Activated CD4-positive, alpha-beta memory T cell treated with anti-CD3 and anti-CD28 coated beads for 36 hours (primary cell): ENCODE measurements at regions of chr20 and their contacts with region 1.

Region 1: GRCh38 chr20:37192137-37192854 is 12.9 kb upstream of the MROH8 start:
- DNase-seq: peak; percentile 80
- H3K4me3 Mint-ChIP-seq: no peak overlapping the region
- H3K27ac Mint-ChIP-seq: no peak overlapping the region
- H3K4me1 Mint-ChIP-seq: peaks cover 73% of the 10 kb centered on the region
- H3K27me3 Mint-ChIP-seq: no peaks in the 10 kb centered on the region

Region 2: DNA sequence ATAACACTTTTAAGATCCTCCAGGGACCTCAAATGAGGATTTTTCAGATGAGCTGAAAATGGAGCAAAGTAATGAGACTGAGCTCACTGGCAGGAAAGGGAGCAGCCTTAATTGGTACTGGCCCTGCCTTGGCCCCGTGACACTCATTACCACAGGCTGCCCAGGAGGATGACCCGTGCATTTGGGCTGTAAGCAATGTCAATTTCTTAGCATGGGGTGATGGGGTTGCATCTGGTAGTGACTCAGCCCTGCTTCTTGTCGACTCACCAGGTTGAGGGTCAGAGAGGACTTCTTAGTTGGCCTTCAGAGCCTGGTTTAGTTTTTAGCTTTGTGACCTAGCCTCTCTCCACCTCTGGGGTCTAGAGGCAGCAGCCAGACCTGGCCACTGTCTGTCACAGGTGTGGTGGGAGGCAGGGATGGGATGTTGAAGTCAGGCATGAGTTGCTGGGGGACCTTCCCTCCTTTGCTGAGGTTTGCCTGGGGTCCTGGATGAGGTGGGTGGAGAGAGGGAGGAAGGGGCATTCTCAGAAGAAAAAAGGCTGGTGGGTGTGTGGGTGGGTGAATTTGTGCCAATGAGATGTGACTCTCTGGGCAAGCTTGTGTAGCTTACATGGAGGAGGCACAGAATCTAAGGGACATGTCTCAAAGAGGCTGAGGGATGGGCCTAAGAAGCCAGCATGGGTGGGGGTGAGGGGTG is 1063.7 kb before region 1 on chr20:
- CTCF ChIA-PET with region 1: no interaction called
- POLR2A ChIA-PET with region 1: no interaction called
- intact Hi-C with region 1: no loop called
- DNase-seq: no peak
- H3K4me3 Mint-ChIP-seq: no peak overlapping the region
- H3K27ac Mint-ChIP-seq: no peak overlapping the region
- H3K4me1 Mint-ChIP-seq: no peaks in the 10 kb centered on the region
- H3K27me3 Mint-ChIP-seq: no peaks in the 10 kb centered on the region

Region 3: GRCh38 chr20:37178839-37179670 is 13.2 kb before region 1 on chr20 and contains the starts of genes MROH8 and RPN2:
- CTCF ChIA-PET with region 1: interaction called, 43 read pairs
- POLR2A ChIA-PET with region 1: interaction called, 6 read pairs
- intact Hi-C with region 1: loop called (anchors 1 kb)
- DNase-seq: peak; percentile 98
- H3K4me3 Mint-ChIP-seq: peak within 1 kb of the TSS; percentile 95
- H3K27ac Mint-ChIP-seq: peak within 1 kb of the TSS; percentile 96
- H3K4me1 Mint-ChIP-seq: peaks cover 33% of the 10 kb centered on the region
- H3K27me3 Mint-ChIP-seq: no peaks in the 10 kb centered on the region
- total RNA-seq, gene MROH8: 1.8 to 2.0 TPM
- total RNA-seq, gene RPN2: 123 to 125 TPM

Region 4: DNA sequence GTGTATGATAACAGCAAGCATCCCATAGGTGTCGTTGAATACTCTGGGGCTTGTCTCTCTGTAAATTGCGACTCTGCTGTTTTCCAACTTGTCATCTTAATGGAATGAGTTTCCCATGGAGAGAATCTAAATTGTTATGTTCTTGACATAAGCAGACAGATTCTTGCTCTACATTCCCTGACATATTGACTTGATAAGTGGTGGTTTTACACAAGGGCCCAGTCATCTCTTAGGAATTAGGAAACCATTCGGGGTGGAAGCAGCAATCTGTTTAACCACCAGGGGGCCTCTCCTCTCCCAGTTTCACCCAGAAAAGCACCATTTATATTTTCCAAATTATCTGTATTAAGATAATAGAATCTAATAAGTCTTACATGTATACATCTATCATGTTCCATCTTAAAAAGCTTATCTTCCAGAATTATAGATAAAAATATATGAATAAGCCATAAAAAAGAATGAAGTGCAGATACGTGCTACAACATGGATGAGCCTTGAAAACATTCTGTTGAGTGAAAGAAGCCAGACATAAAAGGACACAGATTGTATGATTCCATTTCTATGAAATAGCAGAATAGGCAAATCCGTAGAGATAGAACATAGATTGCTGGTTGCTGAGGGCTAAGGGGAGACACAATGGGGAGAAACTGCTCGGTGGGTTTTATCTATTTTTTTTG is 10.1 kb after region 1 on chr20:
- CTCF ChIA-PET with region 1: interaction called, 31 read pairs
- POLR2A ChIA-PET with region 1: no interaction called
- intact Hi-C with region 1: no loop called
- DNase-seq: peak; percentile 20
- H3K4me3 Mint-ChIP-seq: no peak overlapping the region
- H3K27ac Mint-ChIP-seq: no peak overlapping the region
- H3K4me1 Mint-ChIP-seq: no peaks in the 10 kb centered on the region
- H3K27me3 Mint-ChIP-seq: no peaks in the 10 kb centered on the region

Region 5: GRCh38 chr20:37209661-37210314 is 17.5 kb after region 1 on chr20:
- CTCF ChIA-PET with region 1: interaction called, 16 read pairs
- POLR2A ChIA-PET with region 1: no interaction called
- intact Hi-C with region 1: no loop called
- DNase-seq: no peak
- H3K4me3 Mint-ChIP-seq: no peak overlapping the region
- H3K27ac Mint-ChIP-seq: no peak overlapping the region
- H3K4me1 Mint-ChIP-seq: no peaks in the 10 kb centered on the region
- H3K27me3 Mint-ChIP-seq: no peaks in the 10 kb centered on the region

Region 6: DNA sequence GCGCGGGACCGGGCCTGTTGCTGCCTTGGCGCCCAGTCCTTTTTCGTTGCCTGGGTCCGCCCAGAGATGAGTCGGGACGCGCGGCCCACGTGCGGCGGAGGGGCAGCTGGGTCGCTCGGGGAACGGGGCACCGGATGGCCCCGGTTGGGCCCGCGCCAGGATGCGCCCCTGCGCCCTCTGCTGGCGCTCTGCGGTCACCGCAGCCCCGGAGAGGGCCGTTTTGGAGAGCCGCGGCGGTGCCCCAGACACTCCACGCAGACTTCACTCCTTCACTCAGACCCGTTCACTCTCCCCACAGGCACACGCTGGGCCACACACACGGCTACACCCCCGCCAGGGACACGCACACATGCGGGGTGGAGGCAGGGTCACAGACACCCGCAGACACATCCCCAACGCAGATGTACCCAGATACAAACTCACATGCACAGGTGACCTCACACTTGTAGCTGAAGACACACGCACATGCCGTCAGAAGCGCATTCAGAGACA is 192.4 kb after region 1 on chr20:
- CTCF ChIA-PET with region 1: interaction called, 3 read pairs
- POLR2A ChIA-PET with region 1: no interaction called
- intact Hi-C with region 1: loop called (anchors 10 kb)
- DNase-seq: peak; percentile 85
- H3K4me3 Mint-ChIP-seq: peak overlapping the region; percentile 59
- H3K27ac Mint-ChIP-seq: no peak overlapping the region
- H3K4me1 Mint-ChIP-seq: peaks cover 7% of the 10 kb centered on the region
- H3K27me3 Mint-ChIP-seq: peaks cover 1% of the 10 kb centered on the region

Region 7: GRCh38 chr20:37457921-37458320 is 265.6 kb after region 1 on chr20:
- CTCF ChIA-PET with region 1: no interaction called
- POLR2A ChIA-PET with region 1: no interaction called
- intact Hi-C with region 1: no loop called
- DNase-seq: no peak
- H3K4me3 Mint-ChIP-seq: no peak overlapping the region
- H3K27ac Mint-ChIP-seq: no peak overlapping the region
- H3K4me1 Mint-ChIP-seq: no peaks in the 10 kb centered on the region
- H3K27me3 Mint-ChIP-seq: peaks cover 7% of the 10 kb centered on the region

Region 8: GRCh38 chr20:37534401-37535157 is 342.3 kb after region 1 on chr20:
- CTCF ChIA-PET with region 1: interaction called, 23 read pairs
- POLR2A ChIA-PET with region 1: no interaction called
- intact Hi-C with region 1: loop called (anchors 2 kb)
- DNase-seq: peak; percentile 37
- H3K4me3 Mint-ChIP-seq: no peak overlapping the region
- H3K27ac Mint-ChIP-seq: no peak overlapping the region
- H3K4me1 Mint-ChIP-seq: peaks cover 4% of the 10 kb centered on the region
- H3K27me3 Mint-ChIP-seq: peaks cover 2% of the 10 kb centered on the region